Calu3 (cell line): ENCODE measurements at regions of chr13 and their contacts with region 1.

Region 1: GRCh38 chr13:69524459-69525155 is 583.0 kb upstream of the ATXN8OS start:
- DNase-seq: no peak
- H3K4me3 Mint-ChIP-seq: no peak overlapping the region
- H3K27ac Mint-ChIP-seq: no peak overlapping the region
- H3K4me1 Mint-ChIP-seq: no peaks in the 10 kb centered on the region
- H3K27me3 Mint-ChIP-seq: no peaks in the 10 kb centered on the region
- CTCF ChIP-seq: no peak

Region 2: GRCh38 chr13:69331245-69331644 is 193.4 kb before region 1 on chr13:
- CTCF ChIA-PET with region 1: no interaction called
- intact Hi-C with region 1: loop called (anchors 10 kb)
- DNase-seq: no peak
- H3K4me3 Mint-ChIP-seq: no peak overlapping the region
- H3K27ac Mint-ChIP-seq: no peak overlapping the region
- H3K4me1 Mint-ChIP-seq: no peaks in the 10 kb centered on the region
- H3K27me3 Mint-ChIP-seq: no peaks in the 10 kb centered on the region
- CTCF ChIP-seq: no peak